ENCODE measurements at regions of chr6 and their contacts with region 1.

Region 1: GRCh38 chr6:132530293-132530974 is 7.6 kb upstream of the TAAR9 start:
- DNase-seq: peak in 1 of 2 donors; percentile 59
- ATAC-seq: peak; percentile 87
- H3K4me3 ChIP-seq: no peak overlapping the region
- H3K27ac ChIP-seq: no peak overlapping the region
- H3K4me1 ChIP-seq: peaks cover 0 to 1% of the 10 kb centered on the region in 2 donors
- H3K27me3 ChIP-seq: no peaks in the 10 kb centered on the region

Region 2: DNA sequence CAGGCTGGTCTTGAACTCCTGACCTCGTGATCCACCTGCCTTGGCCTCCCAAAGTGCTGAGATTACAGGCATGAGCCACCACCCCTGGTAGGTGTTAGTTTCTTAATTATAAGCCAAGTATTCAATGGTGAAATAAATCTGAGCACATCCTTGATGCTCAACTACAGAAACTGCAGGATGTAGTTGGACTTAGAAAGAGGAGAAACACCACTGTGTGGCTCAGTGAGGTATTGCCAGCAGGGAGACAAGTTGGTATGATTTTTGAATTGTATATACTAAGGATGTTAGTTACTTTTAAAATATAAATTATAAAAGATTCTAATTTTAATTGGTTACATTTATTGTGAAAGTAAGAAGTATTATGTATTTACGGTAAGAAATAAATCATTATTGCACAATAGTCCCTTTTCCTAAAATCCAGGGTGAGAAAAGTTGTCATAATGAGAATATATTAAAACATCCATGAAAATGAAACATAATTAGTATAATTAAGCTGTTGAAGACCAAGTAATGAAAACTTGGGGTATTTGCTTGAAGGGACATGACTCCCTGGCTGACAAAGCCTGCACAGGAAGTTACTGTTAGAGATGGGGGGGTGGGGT is 250.4 kb after region 1 on chr6:
- intact Hi-C with region 1: no loop called
- DNase-seq: no peak
- ATAC-seq: no peak
- H3K4me3 ChIP-seq: no peak overlapping the region
- H3K27ac ChIP-seq: no peak overlapping the region
- H3K4me1 ChIP-seq: no peaks in the 10 kb centered on the region
- H3K27me3 ChIP-seq: no peaks in the 10 kb centered on the region

Region 3: GRCh38 chr6:132798869-132799538 is 268.6 kb after region 1 on chr6:
- intact Hi-C with region 1: loop called in 1 of 2 experiments (anchors 10 kb)
- DNase-seq: peak; percentile 73 to 82
- ATAC-seq: peak; percentile 79
- H3K4me3 ChIP-seq: peak overlapping the region; percentile 53 to 88
- H3K27ac ChIP-seq: no peak overlapping the region
- H3K4me1 ChIP-seq: no peaks in the 10 kb centered on the region
- H3K27me3 ChIP-seq: no peaks in the 10 kb centered on the region

Measured in aorta (tissue), 5 donors.